Breast epithelium (tissue), 4 donors: ENCODE measurements at regions of chr11 and their contacts with region 1.

Region 1: DNA sequence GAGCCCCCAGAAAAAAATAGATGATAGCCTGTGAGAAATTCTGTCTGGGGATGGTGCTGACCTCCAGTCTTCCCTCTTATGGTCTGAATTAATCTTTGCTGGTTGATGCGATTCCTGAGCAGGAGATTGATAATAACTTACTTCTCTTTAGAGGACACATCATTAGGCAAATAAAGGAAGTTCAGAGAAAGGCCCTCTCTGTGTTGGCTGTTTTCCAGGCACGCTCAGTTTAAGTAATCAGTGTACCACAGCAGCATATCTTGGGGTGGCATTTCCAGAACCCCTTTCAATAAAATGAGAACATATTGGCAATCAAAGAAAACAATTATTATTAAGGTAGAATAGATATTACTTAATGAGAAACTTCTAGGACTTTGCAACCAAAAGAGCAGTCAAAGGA is 1129.3 kb upstream of the RAG2 start:
- DNase-seq: no peak
- H3K4me3 ChIP-seq: no peak overlapping the region
- H3K27ac ChIP-seq: no peak overlapping the region
- H3K4me1 ChIP-seq: no peaks in the 10 kb centered on the region
- H3K27me3 ChIP-seq: no peaks in the 10 kb centered on the region
- CTCF ChIP-seq: no peak
- POLR2A ChIP-seq: no peak

Region 2: GRCh38 chr11:37812281-37812880 is 85.0 kb after region 1 on chr11:
- intact Hi-C with region 1: no loop called
- DNase-seq: no peak
- H3K4me3 ChIP-seq: no peak overlapping the region
- H3K27ac ChIP-seq: no peak overlapping the region
- H3K4me1 ChIP-seq: no peaks in the 10 kb centered on the region
- H3K27me3 ChIP-seq: no peaks in the 10 kb centered on the region
- CTCF ChIP-seq: no peak
- POLR2A ChIP-seq: no peak

Region 3: GRCh38 chr11:38005597-38005996 is 278.2 kb after region 1 on chr11:
- intact Hi-C with region 1: loop called (anchors 5 kb)
- DNase-seq: no peak
- H3K4me3 ChIP-seq: no peak overlapping the region
- H3K27ac ChIP-seq: no peak overlapping the region
- H3K4me1 ChIP-seq: no peaks in the 10 kb centered on the region
- H3K27me3 ChIP-seq: no peaks in the 10 kb centered on the region
- CTCF ChIP-seq: no peak
- POLR2A ChIP-seq: no peak